PC-9 (cell line): ENCODE measurements at regions of chr6 and their contacts with region 1.

Region 1: GRCh38 chr6:17536586-17536985 is 63.5 kb upstream of the FAM8A1 start:
- DNase-seq: no peak
- H3K4me3 ChIP-seq: no peak overlapping the region
- H3K27ac ChIP-seq: no peak overlapping the region
- H3K4me1 ChIP-seq: no peaks in the 10 kb centered on the region
- H3K27me3 ChIP-seq: no peaks in the 10 kb centered on the region
- CTCF ChIP-seq: no peak

Region 2: DNA sequence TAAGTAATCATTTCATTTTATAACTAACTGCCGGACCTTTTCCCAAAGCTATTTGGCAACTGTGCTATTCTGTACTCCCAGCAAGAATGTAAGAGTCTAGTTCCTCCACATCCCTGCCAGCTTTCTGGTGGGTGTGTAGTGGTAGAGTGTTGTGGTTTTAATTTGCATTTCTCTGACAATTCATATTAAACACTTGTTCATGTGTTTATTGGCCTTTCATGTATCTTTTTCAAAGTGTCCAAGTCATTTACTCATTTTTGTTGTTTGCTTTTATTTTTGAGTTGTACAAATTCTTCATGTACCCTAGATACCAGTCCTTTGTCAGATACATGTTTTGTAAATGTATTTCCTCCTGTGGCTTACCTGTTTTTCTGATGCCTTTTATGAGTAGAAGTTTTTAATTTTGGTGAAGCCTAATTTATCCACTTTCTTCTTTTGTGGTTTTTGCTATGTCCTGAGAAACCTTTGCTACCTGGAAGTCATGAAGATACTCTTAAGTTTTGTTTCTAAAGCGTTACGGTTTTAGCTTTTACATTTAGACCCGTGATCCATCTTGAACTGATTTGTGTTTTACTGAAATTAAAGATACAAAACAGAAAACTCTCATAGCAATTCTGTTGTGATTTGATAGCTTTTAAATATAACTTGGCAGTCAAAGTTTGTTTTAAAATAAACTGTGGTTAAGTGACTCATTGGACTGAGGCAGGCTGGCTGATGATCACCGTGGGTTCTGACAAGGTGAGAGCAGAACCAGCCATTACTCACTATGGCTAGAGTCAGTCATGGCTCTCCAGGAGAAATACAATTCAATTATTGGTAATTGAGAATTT is 1399.8 kb before region 1 on chr6:
- CTCF ChIA-PET with region 1: no interaction called
- POLR2A ChIA-PET with region 1: interaction called, 12 read pairs
- intact Hi-C with region 1: no loop called
- DNase-seq: peak; percentile 17 to 63
- H3K4me3 ChIP-seq: peak overlapping the region; percentile 36; the same call in 1 of the 2 replicates
- H3K27ac ChIP-seq: peak overlapping the region; percentile 58
- H3K4me1 ChIP-seq: peaks cover 63% of the 10 kb centered on the region
- H3K27me3 ChIP-seq: no peaks in the 10 kb centered on the region
- CTCF ChIP-seq: no peak

Region 3: GRCh38 chr6:17493286-17493685 is 43.3 kb before region 1 on chr6:
- CTCF ChIA-PET with region 1: no interaction called
- POLR2A ChIA-PET with region 1: no interaction called
- intact Hi-C with region 1: no loop called
- DNase-seq: peak in 1 of 2 experiments; percentile 8
- H3K4me3 ChIP-seq: no peak overlapping the region
- H3K27ac ChIP-seq: no peak overlapping the region
- H3K4me1 ChIP-seq: no peaks in the 10 kb centered on the region
- H3K27me3 ChIP-seq: no peaks in the 10 kb centered on the region
- CTCF ChIP-seq: no peak